ENCODE measurements at regions of chr6 and their contacts with region 1.

Region 1: GRCh38 chr6:30844091-30844535 is 40.2 kb upstream of the DDR1 start:
- DNase-seq: no peak

Region 2: DNA sequence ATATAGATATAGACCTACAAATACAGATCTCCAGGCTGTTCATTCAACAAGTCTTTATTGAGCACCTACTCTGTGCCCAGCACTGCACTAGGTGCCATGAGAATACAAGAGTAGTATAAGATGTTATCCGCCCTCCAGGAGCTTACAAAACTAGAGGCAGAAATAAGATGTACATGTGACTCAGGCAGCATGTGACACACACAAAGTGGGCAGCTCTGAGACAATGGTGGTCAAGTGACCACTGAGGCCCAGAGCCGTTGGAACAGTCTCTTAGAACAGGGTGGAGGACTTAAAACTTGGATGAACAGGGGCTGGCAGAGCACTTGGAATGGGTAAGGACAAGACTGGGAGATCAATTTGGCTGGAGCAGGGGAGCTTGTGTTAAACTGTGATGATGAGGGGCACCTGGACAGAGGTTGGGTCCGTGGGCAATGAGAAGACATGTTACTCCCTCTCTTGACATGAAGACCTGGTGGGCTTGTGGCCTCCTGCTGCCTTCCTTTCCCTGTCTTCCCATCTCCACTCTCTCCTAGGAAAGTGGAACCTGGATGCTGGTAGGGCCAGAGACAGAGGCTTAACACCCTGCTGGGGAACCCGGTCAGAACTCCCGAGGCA is 659.6 kb before region 1 on chr6:
- CTCF ChIA-PET with region 1: no interaction called
- POLR2A ChIA-PET with region 1: no interaction called
- DNase-seq: no peak

Region 3: GRCh38 chr6:30227763-30228487 is 616.2 kb before region 1 on chr6:
- CTCF ChIA-PET with region 1: no interaction called
- POLR2A ChIA-PET with region 1: no interaction called
- DNase-seq: no peak

Region 4: DNA sequence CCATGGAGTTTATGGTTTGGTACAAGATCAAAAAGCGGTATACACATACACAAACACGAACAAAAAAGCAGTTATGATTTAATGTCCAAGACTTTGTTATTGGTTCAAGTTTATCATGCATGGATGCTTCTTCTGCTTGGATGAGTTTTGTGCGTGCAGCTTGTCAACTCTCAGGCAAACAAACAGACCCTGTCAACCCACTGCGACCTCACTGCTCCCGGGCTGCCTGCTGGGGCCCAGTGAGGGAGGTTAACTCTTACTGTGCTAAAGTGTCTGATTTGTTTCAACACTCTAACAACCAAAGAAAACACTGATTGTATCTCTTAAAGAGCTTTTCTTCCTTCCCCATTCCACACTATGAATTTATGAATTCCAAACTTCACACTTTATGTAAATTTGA is 13.4 kb after region 1 on chr6:
- CTCF ChIA-PET with region 1: no interaction called
- POLR2A ChIA-PET with region 1: interaction called, 12 read pairs
- DNase-seq: peak; percentile 50

Region 5: GRCh38 chr6:31163922-31164321 is 319.8 kb after region 1 on chr6:
- CTCF ChIA-PET with region 1: no interaction called
- POLR2A ChIA-PET with region 1: no interaction called
- DNase-seq: no peak

Measured in HEK293T (cell line).